Right ventricle myocardium inferior (tissue), 1 donor: ENCODE measurements at regions of chr1 and their contacts with region 1.

Region 1: DNA sequence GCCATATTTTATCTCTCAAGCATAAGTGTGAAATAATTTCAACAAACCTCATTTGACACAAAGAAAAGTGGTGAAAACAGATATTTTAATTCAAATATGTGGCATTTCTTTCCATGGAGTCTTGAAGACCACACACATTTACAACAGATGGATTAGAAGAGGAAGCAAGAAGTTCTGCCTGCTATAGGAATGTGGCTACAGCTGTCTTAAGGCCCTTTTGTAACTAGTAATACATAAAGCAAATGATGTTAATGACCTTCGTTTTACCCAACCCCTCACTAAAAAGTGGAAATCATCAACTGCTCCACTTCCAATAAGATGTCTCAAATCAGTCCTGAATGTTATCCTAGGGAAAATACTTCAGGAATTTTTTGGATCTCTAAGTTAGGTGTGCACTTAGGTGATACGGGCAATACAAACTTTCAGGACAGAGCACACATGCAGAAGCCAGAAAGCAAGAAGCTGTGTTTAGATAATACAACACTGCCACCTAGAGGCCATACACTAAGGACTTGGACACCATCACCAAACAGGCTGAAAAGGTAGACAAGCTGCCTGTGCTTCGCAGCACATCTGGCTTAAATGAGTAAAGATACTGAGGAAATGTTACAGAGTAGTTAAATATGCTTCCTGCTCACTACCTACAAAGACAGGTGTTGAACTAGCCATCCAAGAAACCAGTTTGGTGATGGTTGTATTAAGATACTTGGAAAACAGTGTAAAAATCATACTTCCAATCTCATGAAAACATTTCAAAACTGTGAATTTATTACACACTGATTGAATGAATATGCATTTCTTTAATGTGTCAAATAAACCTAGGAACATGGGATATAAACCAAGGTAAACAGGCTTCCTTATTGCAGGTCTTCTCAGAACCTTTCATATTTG is 24.4 kb downstream of the RRAGC start:
- DNase-seq: no peak
- ATAC-seq: peak; percentile 74

Region 2: DNA sequence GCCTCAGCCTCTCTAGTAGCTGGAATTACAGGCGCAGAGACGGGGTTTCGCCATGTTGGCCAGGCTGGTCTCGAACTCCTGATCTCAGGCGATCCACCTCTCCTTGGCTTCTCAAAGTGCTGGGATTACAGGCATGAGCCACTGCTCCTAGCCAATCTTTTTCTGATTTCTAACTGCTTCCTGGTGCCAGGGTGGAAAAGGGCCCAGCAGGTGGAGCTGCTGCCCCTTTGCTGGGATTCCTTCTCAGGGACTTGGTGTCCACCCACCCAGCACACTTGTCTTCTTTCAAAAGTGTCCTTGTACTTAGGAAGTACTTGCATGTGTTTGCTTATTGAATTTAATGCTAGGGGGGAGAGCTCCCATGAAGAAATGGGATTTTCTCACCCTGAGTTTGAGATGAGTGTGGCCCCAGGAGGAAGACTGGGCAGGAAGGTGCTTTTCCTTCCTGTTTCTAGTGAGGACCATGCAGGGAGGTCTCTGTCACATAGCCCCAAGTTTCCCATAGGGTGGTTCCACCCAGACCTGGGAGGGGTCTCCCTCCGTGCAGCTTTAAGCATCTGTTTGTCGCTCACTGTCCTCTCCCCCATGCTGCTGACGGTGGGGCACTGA is 808.5 kb before region 1 on chr1:
- intact Hi-C with region 1: loop called (anchors 5 kb)
- DNase-seq: no peak
- ATAC-seq: no peak

Region 3: DNA sequence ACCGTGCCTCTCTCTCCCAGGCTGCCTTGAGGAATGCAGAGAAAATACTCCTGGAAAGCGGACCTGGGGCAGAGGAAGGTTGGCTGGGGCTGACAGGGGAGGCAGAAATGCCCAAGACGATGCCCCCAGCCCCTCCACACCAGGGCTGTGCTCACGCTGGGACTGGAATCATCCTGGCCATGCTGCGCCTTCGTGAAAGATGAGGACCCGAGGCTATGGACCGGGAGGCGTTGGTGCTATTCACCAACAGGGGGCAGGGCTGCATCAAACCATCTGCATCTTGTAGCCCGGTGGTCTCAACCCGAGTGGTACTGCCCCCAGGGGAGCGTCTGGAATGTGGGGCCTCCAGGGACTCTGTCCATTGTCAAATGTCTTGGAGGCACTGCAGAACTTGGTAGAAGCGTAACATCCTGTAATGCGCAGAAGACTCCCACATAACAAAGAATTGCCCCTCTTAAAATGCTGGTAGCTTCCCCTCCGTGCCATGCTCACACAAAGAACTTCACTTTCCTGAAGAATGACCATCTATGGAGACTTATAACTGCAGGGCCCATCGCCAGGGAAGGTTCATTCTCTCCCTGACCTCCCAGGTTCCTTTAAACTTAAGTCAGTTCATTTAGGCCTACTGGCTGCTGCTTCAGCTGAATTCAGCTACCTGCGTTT is 226.8 kb before region 1 on chr1:
- intact Hi-C with region 1: loop called (anchors 5 kb)
- DNase-seq: no peak
- ATAC-seq: no peak